CD4-positive, alpha-beta T cell (primary cell): ENCODE measurements at regions of chr21 and their contacts with region 1.

Region 1: DNA sequence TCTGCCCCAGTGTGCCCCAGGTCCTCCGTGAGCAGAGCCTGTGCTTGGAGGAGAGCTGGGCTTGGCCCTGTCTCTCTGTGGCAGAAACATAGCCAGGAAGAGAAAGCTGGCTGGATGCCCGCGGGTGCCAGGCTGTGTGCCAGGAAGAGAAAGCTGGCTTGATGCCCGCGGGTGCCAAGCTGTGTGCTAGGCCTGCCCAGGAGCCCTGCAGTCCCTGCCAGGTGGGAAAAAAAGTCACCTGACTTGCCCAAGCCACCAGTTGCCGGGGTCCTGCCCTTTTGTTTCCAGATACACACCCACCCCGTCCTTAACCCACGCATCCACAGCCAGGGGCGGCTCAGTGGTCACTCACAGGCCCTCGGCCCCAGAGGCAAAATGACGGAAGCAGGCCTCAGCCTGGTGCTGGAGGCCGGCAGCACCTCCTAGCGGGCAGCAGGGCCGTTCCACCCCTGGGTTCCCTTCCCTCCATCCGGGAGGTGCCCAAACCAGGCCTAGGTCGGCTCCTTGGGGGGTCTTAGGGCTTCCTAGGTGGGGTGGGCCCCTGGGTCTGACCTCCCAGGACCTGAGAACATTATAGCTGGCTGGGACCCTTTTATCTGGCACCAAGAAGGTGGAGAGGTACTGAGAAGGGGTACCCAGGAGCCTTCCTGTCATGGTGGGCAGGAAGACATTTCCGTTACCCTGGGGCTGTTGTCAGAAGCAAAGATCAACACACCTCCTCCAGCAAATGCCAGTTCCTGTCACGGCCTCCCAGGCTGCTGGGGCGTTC is 9.1 kb downstream of the ITGB2 start:
- DNase-seq: peak; percentile 45 to 88 (median 69)
- ATAC-seq: peak; percentile 74
- H3K4me3 ChIP-seq: peak overlapping the region; percentile 44
- H3K4me3 Mint-ChIP-seq: peak overlapping the region; percentile 76
- H3K27ac ChIP-seq: peak overlapping the region; percentile 77 to 86
- H3K27ac Mint-ChIP-seq: peak overlapping the region; percentile 88
- H3K4me1 ChIP-seq: peaks cover 98% of the 10 kb centered on the region
- H3K4me1 Mint-ChIP-seq: peaks cover 77% of the 10 kb centered on the region
- H3K27me3 ChIP-seq: no peaks in the 10 kb centered on the region
- H3K27me3 Mint-ChIP-seq: no peaks in the 10 kb centered on the region
- CTCF ChIP-seq: peak; percentile 58

Region 2: DNA sequence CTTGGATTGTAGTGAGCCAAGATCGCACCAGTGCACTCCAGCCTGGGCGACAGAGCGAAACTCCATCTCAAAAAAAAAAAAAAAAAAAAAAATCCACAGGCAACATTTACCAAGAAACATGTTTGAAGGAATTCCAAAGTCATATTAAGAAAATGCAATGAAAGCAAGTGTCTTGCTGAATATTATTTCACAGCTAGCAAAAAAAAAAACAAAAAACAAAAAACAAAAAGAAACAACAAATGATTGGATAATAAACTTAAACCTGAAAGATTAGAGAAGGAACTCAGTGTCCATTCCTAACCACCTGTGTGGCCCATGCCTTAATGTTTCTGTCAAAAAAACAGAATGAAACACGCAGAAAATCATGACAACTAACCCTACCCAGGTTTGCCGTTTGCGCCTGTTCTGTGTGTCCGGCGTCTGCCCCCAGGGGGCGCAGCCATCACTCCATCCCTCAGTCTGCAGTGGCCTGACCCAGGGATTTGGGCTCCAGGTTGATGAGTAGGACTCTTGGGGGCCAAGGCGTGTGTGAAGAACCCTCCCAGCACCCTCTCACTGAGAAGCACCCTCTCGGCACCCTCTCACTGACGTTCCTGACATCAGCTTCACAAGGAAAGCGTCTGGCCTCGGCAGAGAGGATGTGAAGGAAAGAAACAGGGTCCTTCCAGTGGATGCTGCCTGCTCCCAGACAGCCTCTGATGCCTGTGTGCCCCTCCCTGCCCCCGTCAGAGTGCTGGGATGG is 18.9 kb before region 1 on chr21:
- CTCF ChIA-PET with region 1: interaction called, 5 read pairs
- POLR2A ChIA-PET with region 1: interaction called, 6 read pairs
- intact Hi-C with region 1: loop called (anchors 1 to 2 kb)
- DNase-seq: peak; percentile 66 to 91 (median 76)
- ATAC-seq: peak; percentile 94
- H3K4me3 ChIP-seq: no peak overlapping the region
- H3K4me3 Mint-ChIP-seq: no peak overlapping the region
- H3K27ac ChIP-seq: no peak overlapping the region
- H3K27ac Mint-ChIP-seq: peak overlapping the region; percentile 79
- H3K4me1 ChIP-seq: peaks cover 30% of the 10 kb centered on the region
- H3K4me1 Mint-ChIP-seq: peaks cover 15% of the 10 kb centered on the region
- H3K27me3 ChIP-seq: no peaks in the 10 kb centered on the region
- H3K27me3 Mint-ChIP-seq: no peaks in the 10 kb centered on the region
- CTCF ChIP-seq: peak; percentile 94

Region 3: DNA sequence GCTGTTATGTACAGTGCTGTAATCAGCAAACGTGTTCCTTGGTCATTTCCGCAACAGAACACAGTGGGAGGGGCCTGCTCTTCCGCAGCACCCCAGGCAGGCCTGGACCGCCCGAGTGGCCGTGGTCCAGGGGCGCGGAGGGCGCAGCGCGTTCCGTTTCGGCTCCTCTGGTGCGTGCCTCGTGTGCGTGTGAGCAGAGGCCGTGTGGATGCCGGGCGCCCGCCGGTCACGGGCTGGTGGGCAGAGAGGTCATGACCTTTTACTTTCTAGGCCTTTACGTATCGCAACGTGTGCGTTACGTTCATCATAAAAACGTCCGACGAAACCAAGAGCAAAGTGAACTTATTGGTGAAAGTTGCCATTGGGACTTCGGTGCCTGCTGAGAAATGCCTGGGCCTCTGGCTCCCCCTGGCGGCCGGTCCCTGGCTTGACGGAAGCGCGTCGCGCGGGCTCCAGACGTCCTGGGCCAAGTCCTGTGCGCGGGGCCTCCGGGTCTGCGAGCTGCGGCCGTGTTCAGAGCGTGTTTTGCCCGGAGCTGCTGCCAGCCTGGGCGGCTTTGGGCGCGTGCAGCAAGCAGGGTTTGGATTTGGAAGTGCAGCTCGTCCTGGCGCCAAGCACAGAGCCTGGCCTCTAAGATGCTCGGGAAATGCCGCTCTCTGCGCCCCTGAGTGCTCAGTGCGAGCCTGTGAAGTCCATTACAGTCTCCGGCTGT is 527.7 kb after region 1 on chr21:
- CTCF ChIA-PET with region 1: no interaction called
- POLR2A ChIA-PET with region 1: no interaction called
- intact Hi-C with region 1: no loop called
- DNase-seq: peak; percentile 73 to 92 (median 84)
- ATAC-seq: peak; percentile 85
- H3K4me3 ChIP-seq: peak overlapping the region; percentile 38
- H3K4me3 Mint-ChIP-seq: peak overlapping the region; percentile 74
- H3K27ac ChIP-seq: no peak overlapping the region
- H3K27ac Mint-ChIP-seq: peak overlapping the region; percentile 73
- H3K4me1 ChIP-seq: peaks cover 21% of the 10 kb centered on the region
- H3K4me1 Mint-ChIP-seq: peaks cover 21% of the 10 kb centered on the region
- H3K27me3 ChIP-seq: peaks cover 0 to 2% of the 10 kb centered on the region in 2 experiments
- H3K27me3 Mint-ChIP-seq: peaks cover 8% of the 10 kb centered on the region
- CTCF ChIP-seq: peak; percentile 91